OCI-LY7 (cell line): ENCODE measurements at regions of chr14 and their contacts with region 1.

Region 1: GRCh38 chr14:61456720-61457119 is 135.3 kb downstream of the PRKCH start:
- DNase-seq: peak; percentile 89
- H3K4me3 ChIP-seq: no peak overlapping the region
- H3K27ac ChIP-seq: no peak overlapping the region
- H3K4me1 ChIP-seq: peaks cover 6% of the 10 kb centered on the region
- CTCF ChIP-seq: peak; percentile 96

Region 2: GRCh38 chr14:61296719-61297502 is 159.8 kb before region 1 on chr14:
- CTCF ChIA-PET with region 1: no interaction called
- POLR2A ChIA-PET with region 1: no interaction called
- intact Hi-C with region 1: loop called (anchors 5 kb)
- DNase-seq: peak; percentile 42
- H3K4me3 ChIP-seq: no peak overlapping the region
- H3K27ac ChIP-seq: no peak overlapping the region
- H3K4me1 ChIP-seq: peaks cover 8% of the 10 kb centered on the region
- CTCF ChIP-seq: peak; percentile 89

Region 3: GRCh38 chr14:61484826-61485585 is 28.3 kb after region 1 on chr14:
- CTCF ChIA-PET with region 1: no interaction called
- POLR2A ChIA-PET with region 1: no interaction called
- intact Hi-C with region 1: no loop called
- DNase-seq: no peak
- H3K4me3 ChIP-seq: no peak overlapping the region
- H3K27ac ChIP-seq: no peak overlapping the region
- H3K4me1 ChIP-seq: peaks cover 25% of the 10 kb centered on the region
- CTCF ChIP-seq: no peak